Posterior vena cava (tissue), 2 donors: ENCODE measurements at regions of chr20 and their contacts with region 1.

Region 1: DNA sequence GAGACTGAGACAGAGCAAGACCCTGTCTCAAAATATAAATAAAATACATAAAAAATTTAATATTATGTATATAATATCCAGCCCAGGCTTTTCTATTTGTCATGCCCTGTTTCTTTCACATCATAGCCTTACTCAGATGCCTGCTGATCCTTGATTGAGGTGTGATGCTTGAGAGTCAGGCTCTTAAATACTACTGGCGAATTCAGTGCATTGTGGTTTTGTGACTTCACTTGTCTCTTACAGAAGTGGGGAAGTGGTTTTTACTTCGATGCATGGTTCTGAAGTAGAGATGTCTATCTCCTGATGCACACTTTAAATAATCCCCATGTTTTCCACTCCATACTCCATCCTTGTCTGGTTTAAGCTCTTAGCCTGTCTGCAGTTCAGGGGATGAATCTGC is 29.1 kb downstream of the ASXL1 start:
- DNase-seq: no peak

Region 2: DNA sequence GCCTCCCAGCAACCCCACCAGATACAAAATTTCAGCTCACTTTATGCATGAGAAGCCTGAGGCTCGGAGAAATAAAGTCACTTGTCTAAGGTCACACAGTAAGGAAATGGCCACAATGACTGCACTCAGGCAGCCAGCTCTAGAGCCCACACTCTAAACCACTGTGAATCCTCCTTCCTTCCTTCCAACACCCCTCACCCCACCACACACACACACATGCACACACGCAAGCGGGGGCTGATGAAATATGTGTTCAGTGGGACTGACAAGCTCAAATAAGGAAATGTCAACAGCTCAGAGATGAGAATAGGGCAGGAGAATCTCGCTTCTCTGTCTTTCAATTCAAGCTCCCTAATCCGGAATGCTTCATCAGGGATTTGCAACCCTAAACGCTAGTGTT is 842.6 kb after region 1 on chr20:
- intact Hi-C with region 1: loop called in 1 of 2 experiments (anchors 5 kb)
- DNase-seq: no peak